PC-3 (cell line): ENCODE measurements at regions of chr2 and their contacts with region 1.

Region 1: GRCh38 chr2:210195101-210195852 is 24.1 kb upstream of the KANSL1L start:
- DNase-seq: peak; percentile 60
- ATAC-seq: no peak
- H3K4me3 ChIP-seq: no peak overlapping the region
- H3K27ac ChIP-seq: no peak overlapping the region
- H3K4me1 ChIP-seq: no peaks in the 10 kb centered on the region
- H3K27me3 ChIP-seq: peaks cover 12% of the 10 kb centered on the region
- CTCF ChIP-seq: peak; percentile 76

Region 2: GRCh38 chr2:208407667-208408066 is 1787.6 kb before region 1 on chr2:
- CTCF ChIA-PET with region 1: no interaction called
- POLR2A ChIA-PET with region 1: no interaction called
- intact Hi-C with region 1: loop called (anchors 10 kb)
- DNase-seq: peak; percentile 55
- ATAC-seq: peak; percentile 78
- H3K4me3 ChIP-seq: no peak overlapping the region
- H3K27ac ChIP-seq: no peak overlapping the region
- H3K4me1 ChIP-seq: no peaks in the 10 kb centered on the region
- H3K27me3 ChIP-seq: peaks cover 88% of the 10 kb centered on the region
- CTCF ChIP-seq: peak; percentile 70

Region 3: DNA sequence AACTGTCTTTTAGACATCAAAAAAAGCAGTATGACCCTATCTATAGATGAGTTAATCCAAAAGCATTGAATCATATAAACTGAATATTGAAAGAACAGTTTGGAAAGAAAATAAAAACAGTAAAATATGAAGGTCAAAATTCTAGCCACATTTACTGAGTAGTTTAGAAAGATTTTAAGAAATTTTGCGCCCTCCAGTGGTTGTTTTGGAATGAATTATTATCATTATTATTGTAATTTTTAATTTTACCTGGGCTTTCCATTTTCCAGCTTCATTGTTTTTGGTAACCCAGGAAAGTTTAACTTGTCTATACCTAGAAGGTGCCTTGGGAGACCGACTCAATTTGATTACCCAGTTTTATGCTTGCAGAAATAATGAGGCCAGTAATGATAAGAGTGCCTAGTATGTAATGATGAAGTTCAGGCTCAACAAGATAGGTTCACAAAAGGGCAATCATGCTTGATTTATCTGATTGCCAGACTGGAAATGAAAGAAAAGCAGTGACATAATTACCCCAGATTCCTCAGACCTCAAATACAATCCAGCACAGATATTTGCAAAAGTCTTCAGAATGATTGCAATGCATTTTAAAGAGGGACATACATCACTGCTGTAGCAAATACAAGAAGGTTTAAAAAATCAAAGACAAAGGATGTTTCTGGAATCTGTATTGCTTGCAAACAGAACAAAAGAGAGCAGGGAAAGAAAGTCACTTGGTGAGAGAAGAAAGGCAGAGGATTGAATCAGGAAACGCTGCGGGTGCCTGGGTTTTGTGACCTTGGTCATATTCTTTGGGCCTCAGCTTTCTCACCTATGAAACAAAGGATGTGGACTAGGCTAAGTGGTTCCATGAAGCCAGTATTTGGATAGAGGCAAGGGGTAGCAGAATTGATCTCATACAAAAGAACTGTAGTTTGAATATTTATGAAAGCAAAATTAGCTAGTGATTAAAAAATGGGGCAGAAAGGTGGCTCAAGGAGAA is 617.6 kb before region 1 on chr2:
- CTCF ChIA-PET with region 1: no interaction called
- POLR2A ChIA-PET with region 1: no interaction called
- intact Hi-C with region 1: loop called (anchors 10 kb)
- DNase-seq: peak; percentile 62
- ATAC-seq: no peak
- H3K4me3 ChIP-seq: no peak overlapping the region
- H3K27ac ChIP-seq: no peak overlapping the region
- H3K4me1 ChIP-seq: no peaks in the 10 kb centered on the region
- H3K27me3 ChIP-seq: no peaks in the 10 kb centered on the region
- CTCF ChIP-seq: peak; percentile 62

Region 4: GRCh38 chr2:209977386-209978239 is 217.7 kb before region 1 on chr2:
- CTCF ChIA-PET with region 1: no interaction called
- POLR2A ChIA-PET with region 1: no interaction called
- intact Hi-C with region 1: loop called (anchors 1 kb)
- DNase-seq: peak; percentile 68
- ATAC-seq: peak; percentile 46; the same call in 1 of the 2 replicates
- H3K4me3 ChIP-seq: no peak overlapping the region
- H3K27ac ChIP-seq: no peak overlapping the region
- H3K4me1 ChIP-seq: no peaks in the 10 kb centered on the region
- H3K27me3 ChIP-seq: peaks cover 31% of the 10 kb centered on the region
- CTCF ChIP-seq: peak; percentile 68

Region 5: DNA sequence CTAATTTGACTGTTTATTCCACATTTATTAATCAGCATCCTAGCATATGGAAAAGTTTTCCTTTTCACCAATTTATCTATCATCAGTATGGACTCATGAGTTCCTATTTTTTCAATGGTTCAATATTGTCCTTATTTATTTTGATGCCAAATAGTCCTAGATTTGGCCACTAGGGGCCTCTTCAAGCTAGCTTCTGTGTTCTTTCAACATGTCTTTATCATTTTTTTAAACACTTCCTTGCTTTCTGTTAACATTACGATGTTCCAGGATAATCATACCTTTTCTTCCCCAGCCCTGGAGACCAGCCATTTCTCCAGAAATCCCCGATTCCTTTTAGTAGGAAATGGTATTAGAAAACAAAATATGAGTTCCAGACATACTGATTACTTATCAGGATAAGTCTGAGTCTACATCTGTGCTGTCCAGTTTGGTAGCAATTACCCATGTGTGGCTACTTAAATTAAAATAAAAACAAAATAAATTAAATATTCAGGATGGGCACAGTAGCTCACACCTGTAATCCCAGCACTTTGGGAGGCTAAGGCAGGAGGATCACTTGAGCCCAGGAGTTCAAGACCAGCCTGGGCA is 122.3 kb before region 1 on chr2:
- CTCF ChIA-PET with region 1: interaction called, 5 read pairs
- POLR2A ChIA-PET with region 1: no interaction called
- intact Hi-C with region 1: loop called (anchors 1 kb)
- DNase-seq: peak; percentile 62
- ATAC-seq: peak; percentile 74
- H3K4me3 ChIP-seq: no peak overlapping the region
- H3K27ac ChIP-seq: no peak overlapping the region
- H3K4me1 ChIP-seq: no peaks in the 10 kb centered on the region
- H3K27me3 ChIP-seq: peaks cover 3% of the 10 kb centered on the region; the same call in 1 of the 2 replicates
- CTCF ChIP-seq: peak; percentile 80

Region 6: DNA sequence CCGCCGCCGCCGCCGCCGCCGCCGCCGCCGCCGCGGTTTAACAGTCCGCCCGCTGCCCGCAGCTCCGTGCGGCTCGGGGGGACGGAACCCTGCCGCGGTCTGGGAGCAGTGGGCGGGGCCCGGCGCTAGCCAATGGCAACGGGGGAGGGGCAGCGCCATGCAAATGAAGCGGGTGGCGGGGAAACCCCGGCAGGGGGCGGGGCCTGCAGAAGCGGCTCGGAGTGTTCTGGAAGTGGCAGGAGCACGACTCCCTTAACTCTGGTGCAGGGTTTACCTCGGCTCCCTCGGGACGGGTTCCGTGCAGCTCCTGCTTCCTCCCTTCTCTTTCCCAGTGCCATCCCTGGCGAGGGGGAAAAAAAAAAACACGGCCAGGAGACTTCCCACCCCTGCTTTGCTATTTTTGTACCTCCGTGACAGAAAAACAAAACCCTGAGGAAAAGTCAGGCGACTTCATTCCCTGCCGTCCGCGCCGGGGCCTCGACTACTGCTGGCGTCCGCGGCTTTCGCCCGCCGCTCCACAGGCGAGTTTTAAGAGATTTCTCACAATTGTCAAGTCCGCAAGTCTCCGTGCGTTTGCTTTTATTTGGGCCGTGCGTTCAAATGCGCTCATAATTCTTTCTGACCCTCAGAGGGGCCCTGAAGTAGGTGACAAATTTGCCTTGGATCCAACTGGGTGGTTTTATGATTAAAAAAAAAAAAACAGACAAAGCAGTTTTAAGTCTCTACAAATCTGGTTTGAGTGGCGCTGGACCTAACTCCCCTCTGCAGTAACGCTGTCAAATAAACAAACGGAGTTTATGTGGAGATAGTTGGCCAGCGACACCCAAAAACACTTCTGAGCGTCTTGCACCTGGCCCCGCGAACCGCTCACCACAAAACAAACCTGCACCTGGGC is 23.7 kb before region 1 on chr2 and contains the start of gene KANSL1L:
- CTCF ChIA-PET with region 1: no interaction called
- POLR2A ChIA-PET with region 1: no interaction called
- intact Hi-C with region 1: loop called (anchors 2 kb)
- DNase-seq: peak; percentile 95
- ATAC-seq: peak; percentile 84
- H3K4me3 ChIP-seq: peak within 1 kb of the TSS; percentile 75
- H3K27ac ChIP-seq: peak within 1 kb of the TSS; percentile 60
- H3K4me1 ChIP-seq: peaks cover 17% of the 10 kb centered on the region
- H3K27me3 ChIP-seq: no peaks in the 10 kb centered on the region; the same call in 1 of the 2 replicates
- CTCF ChIP-seq: no peak
- total RNA-seq, gene KANSL1L: 2.2 and 2.3 TPM in 2 replicates